AG04450 (cell line): ENCODE measurements at regions of chr15 and their contacts with region 1.

Region 1: GRCh38 chr15:73560501-73561117 is 72.6 kb downstream of the NPTN start:
- DNase-seq: peak; percentile 55
- H3K4me3 ChIP-seq: no peak overlapping the region
- H3K27ac ChIP-seq: no peak overlapping the region
- H3K27me3 ChIP-seq: no peaks in the 10 kb centered on the region
- CTCF ChIP-seq: peak; percentile 61

Region 2: GRCh38 chr15:73550190-73550589 is 10.4 kb before region 1 on chr15:
- CTCF ChIA-PET with region 1: interaction called, 13 read pairs
- POLR2A ChIA-PET with region 1: no interaction called
- DNase-seq: no peak
- H3K4me3 ChIP-seq: no peak overlapping the region
- H3K27ac ChIP-seq: no peak overlapping the region
- H3K27me3 ChIP-seq: no peaks in the 10 kb centered on the region
- CTCF ChIP-seq: no peak

Region 3: DNA sequence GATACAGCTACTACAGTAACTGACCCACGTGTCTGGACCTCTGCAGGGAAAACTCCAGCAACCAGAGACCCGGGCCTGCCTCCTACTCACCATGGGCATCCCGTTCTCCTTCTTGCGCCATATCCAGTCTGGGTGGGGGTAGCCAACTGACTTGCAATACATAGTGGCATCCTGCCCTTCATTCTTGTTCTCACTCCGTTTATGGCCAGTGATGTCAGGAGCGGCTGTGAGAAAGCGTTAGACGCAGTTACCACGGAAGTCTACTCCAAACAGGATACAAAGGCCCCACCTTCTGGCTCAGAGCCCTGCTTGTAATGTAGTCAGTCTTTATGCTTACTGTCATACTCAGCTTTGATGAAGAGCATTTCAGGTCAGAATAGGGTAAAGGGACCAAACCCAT is 13.0 kb after region 1 on chr15:
- CTCF ChIA-PET with region 1: interaction called, 12 read pairs
- POLR2A ChIA-PET with region 1: no interaction called
- DNase-seq: peak; percentile 82
- H3K4me3 ChIP-seq: no peak overlapping the region
- H3K27ac ChIP-seq: peak overlapping the region; percentile 66
- H3K27me3 ChIP-seq: no peaks in the 10 kb centered on the region
- CTCF ChIP-seq: no peak

Region 4: GRCh38 chr15:73608941-73609340 is 48.3 kb after region 1 on chr15:
- CTCF ChIA-PET with region 1: interaction called, 15 read pairs
- POLR2A ChIA-PET with region 1: no interaction called
- DNase-seq: no peak
- H3K4me3 ChIP-seq: no peak overlapping the region
- H3K27ac ChIP-seq: peak overlapping the region; percentile 54
- H3K27me3 ChIP-seq: no peaks in the 10 kb centered on the region
- CTCF ChIP-seq: no peak

Region 5: GRCh38 chr15:73677146-73677607 is 116.6 kb after region 1 on chr15:
- CTCF ChIA-PET with region 1: interaction called, 17 read pairs
- POLR2A ChIA-PET with region 1: no interaction called
- DNase-seq: no peak
- H3K4me3 ChIP-seq: no peak overlapping the region
- H3K27ac ChIP-seq: no peak overlapping the region
- H3K27me3 ChIP-seq: peaks cover 27% of the 10 kb centered on the region
- CTCF ChIP-seq: peak; percentile 86